ENCODE measurements at regions of chr15 and their contacts with region 1.

Region 1: GRCh38 chr15:32659340-32660155 is 18.0 kb downstream of the SCG5 start:
- DNase-seq: no peak
- ATAC-seq: peak; percentile 63

Region 2: GRCh38 chr15:32688151-32688639 is 28.6 kb after region 1 on chr15:
- intact Hi-C with region 1: no loop called
- DNase-seq: no peak
- ATAC-seq: no peak

Region 3: GRCh38 chr15:32698773-32699390 is 39.3 kb after region 1 on chr15:
- intact Hi-C with region 1: no loop called
- DNase-seq: no peak
- ATAC-seq: no peak

Region 4: DNA sequence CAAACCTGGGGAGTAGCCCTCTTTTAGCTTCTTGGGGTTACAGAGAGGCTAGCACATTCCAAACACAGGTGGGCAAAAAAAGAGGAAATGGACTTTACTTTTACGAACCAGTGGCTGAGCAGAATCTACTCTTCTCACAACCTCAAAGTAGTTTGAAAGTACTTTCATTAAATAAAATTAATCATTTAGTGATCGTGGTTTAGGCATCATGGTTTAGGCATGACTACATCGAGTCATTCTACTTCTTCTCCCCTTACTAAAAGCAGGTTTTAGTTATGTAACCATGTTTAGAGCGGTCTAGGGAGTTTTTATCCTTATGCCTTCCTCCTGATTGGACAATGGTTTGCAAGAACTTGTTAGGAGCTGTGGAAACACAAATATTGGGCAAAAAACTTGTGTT is 55.7 kb after region 1 on chr15:
- intact Hi-C with region 1: no loop called
- DNase-seq: no peak
- ATAC-seq: no peak

Region 5: GRCh38 chr15:32956006-32956405 is 296.5 kb after region 1 on chr15:
- intact Hi-C with region 1: loop called (anchors 10 kb)
- DNase-seq: no peak
- ATAC-seq: peak; percentile 65

Region 6: DNA sequence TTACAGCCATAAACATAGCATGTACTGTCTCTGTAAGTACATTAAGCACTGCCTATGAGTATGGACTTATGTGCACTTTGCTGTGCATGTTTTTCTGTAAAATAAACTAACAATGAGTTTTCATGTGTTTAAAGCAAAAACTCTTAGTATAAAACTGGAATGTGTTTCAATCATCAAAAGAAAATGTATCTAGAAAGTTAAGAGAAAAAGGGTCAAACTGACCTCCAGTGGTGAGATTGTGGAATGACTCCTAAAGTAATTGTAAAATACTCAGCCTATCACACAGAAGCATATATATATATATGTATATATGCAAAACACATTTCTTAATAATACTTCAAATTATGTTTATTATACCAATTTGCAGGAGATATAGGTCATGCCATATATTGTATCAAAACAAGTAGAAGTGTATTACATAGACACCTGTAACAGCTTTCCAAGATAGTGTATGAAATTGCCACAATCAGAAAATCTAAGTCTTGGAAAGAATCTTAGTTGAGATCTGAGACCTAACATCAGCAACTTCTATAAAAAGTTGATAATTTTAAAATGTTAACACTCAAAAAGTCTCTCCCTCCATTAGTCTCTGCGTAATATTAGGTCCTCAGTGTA is 335.4 kb after region 1 on chr15:
- intact Hi-C with region 1: loop called (anchors 5 kb)
- DNase-seq: no peak
- ATAC-seq: no peak